Heart left ventricle (tissue), 16 donors: ENCODE measurements at regions of chr13 and their contacts with region 1.

Region 1: GRCh38 chr13:49996951-49997895 is at the start of gene TRIM13:
- DNase-seq: peak; percentile 89 to 95 (median 93)
- ATAC-seq: peak; percentile 89 to 94 (median 91)
- H3K4me3 ChIP-seq: peak within 1 kb of the TSS; percentile 60 to 91 (median 85)
- H3K27ac ChIP-seq: peak within 1 kb of the TSS; percentile 96 to 100 (median 98)
- H3K4me1 ChIP-seq: peaks cover 9 to 58% (median 39%) of the 10 kb centered on the region in 12 donors
- H3K27me3 ChIP-seq: no peaks in the 10 kb centered on the region
- CTCF ChIP-seq: peak; percentile 42 to 95 (median 76)
- POLR2A ChIP-seq: peak in 1 of 2 donors; percentile 69
- total RNA-seq, gene TRIM13: 14.6 to 26.9 (median 19.1) TPM

Region 2: DNA sequence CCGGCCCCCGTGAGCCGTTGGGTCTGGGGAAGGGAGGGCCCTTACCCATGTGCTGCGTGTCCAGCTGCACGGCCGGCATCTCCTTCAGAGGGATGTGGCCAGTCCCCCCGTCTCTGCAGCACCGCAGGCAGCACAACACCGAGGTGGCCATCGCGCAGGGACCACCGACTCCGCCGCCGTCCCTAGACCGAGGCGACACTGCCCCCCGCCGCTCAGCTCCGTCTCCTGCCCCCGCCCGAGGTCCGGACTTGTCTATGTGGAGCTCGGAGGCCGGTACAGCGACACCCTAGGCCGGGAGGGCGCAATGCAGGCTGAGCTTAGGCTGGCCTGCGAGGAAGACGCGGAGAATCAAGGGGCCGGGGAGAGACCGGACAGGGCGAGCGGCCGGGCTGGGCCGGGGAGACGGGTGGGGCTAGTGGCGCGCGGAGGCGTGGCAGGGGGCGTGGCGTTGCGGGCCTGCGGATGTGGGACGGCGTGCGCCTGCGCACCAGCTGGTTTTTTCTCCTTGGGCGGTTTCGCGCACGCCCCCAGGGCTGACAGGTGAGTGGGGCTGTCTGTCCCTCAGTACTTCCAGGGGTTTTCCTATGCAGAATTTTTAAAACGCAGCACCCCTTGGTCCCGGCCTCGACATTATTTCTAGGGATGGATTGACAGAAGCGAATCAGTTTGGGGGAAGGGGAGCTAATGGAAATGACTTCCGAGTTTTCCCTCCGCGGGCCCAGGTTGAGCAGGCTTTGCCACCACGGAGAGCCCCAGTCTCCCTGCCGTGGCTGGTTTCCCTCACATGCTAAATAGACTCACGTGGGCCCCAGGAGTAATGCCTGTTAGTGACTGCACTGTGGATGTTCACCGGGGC is 60.9 kb before region 1 on chr13 and contains the start of gene SPRYD7:
- intact Hi-C with region 1: loop called in 1 of 10 experiments (anchors 5 kb)
- DNase-seq: peak; percentile 98 to 99 (median 99)
- ATAC-seq: peak; percentile 99 to 100 (median 100)
- H3K4me3 ChIP-seq: peak within 1 kb of the TSS; percentile 64 to 86 (median 78)
- H3K27ac ChIP-seq: peak within 1 kb of the TSS; percentile 43 to 90 (median 84)
- H3K4me1 ChIP-seq: peaks cover 0 to 50% (median 20%) of the 10 kb centered on the region in 12 donors
- H3K27me3 ChIP-seq: no peaks in the 10 kb centered on the region
- CTCF ChIP-seq: peak; percentile 78 to 99 (median 94)
- POLR2A ChIP-seq: peak; percentile 7 to 66
- total RNA-seq, gene SPRYD7: 6.3 to 14.3 (median 12.3) TPM

Region 3: GRCh38 chr13:50075619-50076097 is 78.4 kb after region 1 on chr13:
- intact Hi-C with region 1: loop called in 9 of 10 experiments (anchors 2 to 5 kb)
- DNase-seq: no peak
- ATAC-seq: no peak
- H3K4me3 ChIP-seq: no peak overlapping the region
- H3K27ac ChIP-seq: no peak overlapping the region
- H3K4me1 ChIP-seq: peaks cover 0 to 85% (median 15%) of the 10 kb centered on the region in 12 donors
- H3K27me3 ChIP-seq: no peaks in the 10 kb centered on the region
- CTCF ChIP-seq: no peak
- POLR2A ChIP-seq: no peak

Region 4: DNA sequence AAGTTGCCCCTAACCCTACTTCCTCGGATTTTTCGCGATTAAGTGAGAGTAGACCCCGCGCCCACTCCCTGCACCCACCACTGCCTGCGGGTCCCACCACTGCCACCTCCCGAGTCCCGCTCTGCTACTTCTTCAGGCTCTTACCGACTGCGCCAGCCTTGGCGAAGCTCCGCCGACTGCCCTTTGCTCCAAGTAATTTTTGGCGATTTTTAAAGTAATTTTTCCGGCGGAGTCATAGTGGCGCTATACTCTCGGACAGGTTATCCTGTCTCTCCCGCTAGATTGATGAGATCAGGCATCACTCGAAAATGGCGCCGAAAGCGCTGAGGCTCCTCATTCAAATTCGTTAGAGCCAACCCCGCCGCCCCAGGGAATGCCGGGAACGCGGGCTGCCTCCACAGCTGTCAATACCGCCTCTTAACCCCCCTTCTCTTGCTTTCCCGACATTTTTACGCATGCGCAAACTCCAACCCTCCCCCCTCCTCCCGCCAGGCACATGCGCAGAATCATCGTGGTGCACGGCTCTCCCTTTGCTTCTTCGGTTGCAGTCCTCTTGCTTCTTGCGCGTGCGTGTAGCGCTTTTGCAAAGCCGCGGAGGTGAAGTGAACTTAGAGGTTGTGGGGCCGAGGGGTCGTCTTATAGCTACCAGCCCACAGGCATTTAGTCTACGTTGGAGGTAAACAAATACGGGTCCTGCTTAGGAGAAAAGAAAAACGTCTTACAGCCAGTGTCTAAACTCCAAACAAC is 84.6 kb after region 1 on chr13:
- intact Hi-C with region 1: loop called in 9 of 10 experiments (anchors 2 to 5 kb)
- DNase-seq: peak; percentile 97 to 98 (median 98)
- ATAC-seq: peak; percentile 95 to 97 (median 96)
- H3K4me3 ChIP-seq: peak overlapping the region; percentile 41 to 80 (median 69)
- H3K27ac ChIP-seq: peak overlapping the region in 11 of 12 donors; percentile 67 to 88 (median 78)
- H3K4me1 ChIP-seq: peaks cover 0 to 64% (median 26%) of the 10 kb centered on the region in 12 donors
- H3K27me3 ChIP-seq: no peaks in the 10 kb centered on the region
- CTCF ChIP-seq: peak in 2 of 12 donors; percentile 14 to 21
- POLR2A ChIP-seq: no peak

Region 5: DNA sequence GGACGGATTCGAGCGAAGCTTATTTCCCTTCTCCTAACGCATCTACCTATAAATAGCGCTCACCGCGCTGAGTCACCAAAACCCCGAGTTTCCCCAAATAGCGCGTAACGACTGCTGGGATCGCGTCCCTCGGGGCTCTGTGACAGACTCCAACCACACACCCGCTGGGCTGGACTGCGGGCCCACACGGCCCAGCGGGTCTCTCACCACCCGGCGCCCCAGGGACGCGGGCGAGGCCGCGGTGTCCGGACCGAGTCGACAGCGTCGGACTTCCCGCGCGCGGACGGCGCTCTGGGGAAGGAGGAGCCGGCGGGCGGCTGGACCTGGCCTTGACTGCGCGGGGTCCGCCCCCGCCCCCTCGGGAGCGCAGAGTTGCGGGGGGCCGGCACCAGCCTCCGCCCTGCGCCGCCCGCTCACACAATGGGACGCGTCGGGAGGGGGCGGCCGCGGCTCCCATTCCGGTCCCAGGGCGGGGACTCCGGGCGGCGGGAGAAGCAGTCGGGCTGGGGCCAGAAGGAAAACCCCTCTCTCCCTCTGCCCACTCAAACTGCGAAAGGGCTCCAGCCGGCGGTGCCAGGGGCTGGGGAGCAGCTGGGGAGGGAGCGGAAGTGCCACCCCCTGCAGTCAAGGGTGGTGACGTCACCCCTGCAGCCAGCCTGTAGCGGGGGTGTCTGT is 126.8 kb after region 1 on chr13:
- intact Hi-C with region 1: loop called in 6 of 10 experiments (anchors 2 to 5 kb)
- DNase-seq: peak; percentile 83 to 99 (median 85)
- ATAC-seq: peak; percentile 92 to 94 (median 94)
- H3K4me3 ChIP-seq: peak overlapping the region; percentile 71 to 98 (median 90)
- H3K27ac ChIP-seq: peak overlapping the region; percentile 99 to 100 (median 99)
- H3K4me1 ChIP-seq: peaks cover 0 to 69% (median 36%) of the 10 kb centered on the region in 12 donors
- H3K27me3 ChIP-seq: peaks cover 0 to 6% (median 0%) of the 10 kb centered on the region in 9 donors
- CTCF ChIP-seq: peak in 4 of 12 donors; percentile 10 to 41 (median 15)
- POLR2A ChIP-seq: peak in 1 of 2 donors; percentile 92

Region 6: GRCh38 chr13:50521831-50522149 is 524.6 kb after region 1 on chr13:
- intact Hi-C with region 1: loop called in 4 of 10 experiments (anchors 5 kb)
- DNase-seq: no peak
- ATAC-seq: peak; percentile 36 to 58 (median 48)
- H3K4me3 ChIP-seq: no peak overlapping the region
- H3K27ac ChIP-seq: peak overlapping the region in 5 of 12 donors; percentile 7 to 61 (median 16)
- H3K4me1 ChIP-seq: peaks cover 0 to 63% (median 18%) of the 10 kb centered on the region in 12 donors
- H3K27me3 ChIP-seq: no peaks in the 10 kb centered on the region
- CTCF ChIP-seq: no peak
- POLR2A ChIP-seq: no peak

Region 7: DNA sequence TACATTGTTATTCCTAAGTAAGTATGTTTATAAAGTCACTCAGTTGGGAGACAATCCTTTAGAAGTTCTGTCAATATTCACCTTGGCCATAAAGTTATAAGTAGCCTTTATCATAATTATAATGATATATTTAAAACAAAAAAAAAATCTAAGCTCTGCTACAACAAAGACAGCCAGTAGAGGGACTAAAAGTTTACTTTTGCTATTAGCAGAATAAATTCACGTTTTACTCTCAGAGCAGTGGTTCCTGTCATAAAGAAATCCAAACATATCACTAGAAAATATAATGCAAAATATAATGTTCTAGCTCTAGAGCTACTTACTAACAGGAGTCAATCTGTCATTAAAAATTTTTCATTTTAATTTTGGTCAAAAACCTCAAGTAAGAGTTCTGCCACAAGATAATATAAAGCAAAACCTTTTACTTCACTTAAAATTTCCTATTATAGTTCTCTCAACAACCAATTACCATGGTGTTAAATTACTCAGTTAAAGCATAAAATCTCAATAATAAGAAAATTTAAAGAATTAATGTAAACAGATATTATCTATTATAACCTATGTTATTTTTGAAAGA is 1437.9 kb after region 1 on chr13:
- intact Hi-C with region 1: no loop called
- DNase-seq: no peak
- ATAC-seq: no peak
- H3K4me3 ChIP-seq: no peak overlapping the region
- H3K27ac ChIP-seq: no peak overlapping the region
- H3K4me1 ChIP-seq: peaks cover 0 to 5% (median 0%) of the 10 kb centered on the region in 12 donors
- H3K27me3 ChIP-seq: no peaks in the 10 kb centered on the region
- CTCF ChIP-seq: peak; percentile 21 to 69 (median 51)
- POLR2A ChIP-seq: no peak